Heart left ventricle (tissue), 16 donors: ENCODE measurements at regions of chr5 and their contacts with region 1.

Region 1: DNA sequence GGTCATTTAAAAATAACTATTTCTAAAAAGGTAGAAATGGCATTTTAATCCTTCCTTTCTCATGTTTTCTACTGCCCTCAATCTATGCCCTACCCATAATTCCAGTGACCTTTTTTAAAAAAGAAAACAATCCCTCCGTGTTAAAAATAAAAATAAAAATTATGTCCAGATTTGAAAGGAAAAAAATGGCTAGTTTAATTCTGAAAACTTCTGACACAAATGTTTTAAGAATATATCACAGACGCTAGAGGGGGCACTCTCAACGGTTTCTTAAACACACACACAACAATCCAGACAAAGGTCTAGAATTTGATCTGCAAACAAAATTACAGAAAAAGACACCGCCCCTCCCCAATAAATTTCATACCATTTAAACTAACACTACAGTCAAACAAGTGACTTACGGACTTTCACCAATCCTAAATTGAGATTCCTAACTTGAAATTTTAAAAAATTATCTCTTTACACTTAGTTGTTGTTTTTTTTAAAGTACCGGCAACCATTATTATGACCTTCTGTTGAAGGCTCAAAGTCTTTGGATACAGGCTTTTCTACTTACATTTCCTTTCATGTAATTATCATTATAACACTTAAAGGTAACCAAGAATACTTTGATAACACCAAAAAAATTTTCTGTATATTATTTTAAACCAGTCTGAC is 38.2 kb downstream of the CLINT1 start:
- DNase-seq: peak in 1 of 5 donors; percentile 22
- ATAC-seq: peak in 1 of 4 donors; percentile 58
- H3K4me3 ChIP-seq: no peak overlapping the region
- H3K27ac ChIP-seq: peak overlapping the region in 5 of 12 donors; percentile 23 to 72 (median 32)
- H3K4me1 ChIP-seq: peaks cover 0 to 54% (median 29%) of the 10 kb centered on the region in 12 donors
- H3K27me3 ChIP-seq: no peaks in the 10 kb centered on the region
- CTCF ChIP-seq: peak; percentile 30 to 70 (median 54)
- POLR2A ChIP-seq: no peak

Region 2: DNA sequence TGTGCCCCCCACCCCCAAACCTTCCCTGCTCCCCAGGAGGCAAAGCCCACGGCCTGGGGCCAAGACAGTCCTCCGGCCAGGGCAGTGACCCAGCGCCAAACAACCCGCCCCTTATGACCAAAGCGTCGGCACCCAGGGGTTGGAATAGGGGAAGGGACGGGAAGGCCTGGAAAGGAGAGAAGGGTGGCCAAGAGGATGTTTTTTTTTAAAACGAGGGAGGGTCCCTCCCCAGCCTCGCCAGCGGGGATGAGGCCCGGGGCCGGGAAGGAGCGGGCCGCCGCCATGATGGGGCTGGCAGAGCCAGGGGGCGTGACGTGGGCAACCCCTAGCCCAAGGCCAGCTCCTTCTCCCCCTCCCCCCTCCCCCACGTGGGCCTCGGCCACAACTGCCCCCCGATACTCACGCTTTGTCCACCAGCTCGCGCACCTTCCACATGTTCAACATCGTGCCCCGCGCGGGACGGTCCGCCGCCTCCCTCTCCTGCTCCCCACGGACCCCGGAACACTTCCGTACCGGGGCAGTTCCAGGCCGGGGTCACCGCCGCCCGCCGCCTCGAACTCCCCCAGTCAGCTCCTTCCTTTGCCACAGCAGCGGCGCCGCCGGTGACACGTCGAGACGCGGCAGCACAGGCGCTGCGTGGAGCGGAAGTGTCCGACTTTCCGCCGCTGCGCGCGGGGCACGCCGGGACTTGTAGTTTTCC is 38.0 kb after region 1 on chr5 and contains the start of gene CLINT1:
- intact Hi-C with region 1: loop called in 7 of 10 experiments (anchors 2 to 5 kb)
- DNase-seq: peak; percentile 93 to 97 (median 94)
- ATAC-seq: peak; percentile 93 to 99 (median 99)
- H3K4me3 ChIP-seq: peak within 1 kb of the TSS; percentile 67 to 98 (median 88)
- H3K27ac ChIP-seq: peak within 1 kb of the TSS; percentile 35 to 93 (median 90)
- H3K4me1 ChIP-seq: peaks cover 0 to 47% (median 26%) of the 10 kb centered on the region in 12 donors
- H3K27me3 ChIP-seq: no peaks in the 10 kb centered on the region
- CTCF ChIP-seq: peak in 1 of 12 donors; percentile 12
- POLR2A ChIP-seq: peak in 1 of 2 donors; percentile 82
- total RNA-seq, gene CLINT1: 40.1 to 84.8 (median 51.2) TPM

Region 3: GRCh38 chr5:157917899-157918809 is 97.4 kb after region 1 on chr5:
- intact Hi-C with region 1: loop called in 5 of 10 experiments (anchors 2 to 10 kb)
- DNase-seq: peak; percentile 51 to 73 (median 58)
- ATAC-seq: peak in 2 of 4 donors; percentile 36 to 55
- H3K4me3 ChIP-seq: no peak overlapping the region
- H3K27ac ChIP-seq: peak overlapping the region in 1 of 12 donors; percentile 24
- H3K4me1 ChIP-seq: peaks cover 0 to 47% (median 29%) of the 10 kb centered on the region in 12 donors
- H3K27me3 ChIP-seq: no peaks in the 10 kb centered on the region
- CTCF ChIP-seq: peak; percentile 9 to 61 (median 44)
- POLR2A ChIP-seq: no peak

Region 4: GRCh38 chr5:157948738-157949410 is 128.2 kb after region 1 on chr5:
- intact Hi-C with region 1: loop called (anchors 1 to 5 kb)
- DNase-seq: peak; percentile 71 to 93 (median 88)
- ATAC-seq: peak; percentile 95 to 100 (median 98)
- H3K4me3 ChIP-seq: peak overlapping the region in 4 of 12 donors; percentile 1 to 26 (median 10)
- H3K27ac ChIP-seq: peak overlapping the region in 4 of 12 donors; percentile 31 to 73 (median 41)
- H3K4me1 ChIP-seq: peaks cover 0 to 9% (median 4%) of the 10 kb centered on the region in 12 donors
- H3K27me3 ChIP-seq: no peaks in the 10 kb centered on the region
- CTCF ChIP-seq: peak; percentile 79 to 95 (median 88)
- POLR2A ChIP-seq: no peak

Region 5: DNA sequence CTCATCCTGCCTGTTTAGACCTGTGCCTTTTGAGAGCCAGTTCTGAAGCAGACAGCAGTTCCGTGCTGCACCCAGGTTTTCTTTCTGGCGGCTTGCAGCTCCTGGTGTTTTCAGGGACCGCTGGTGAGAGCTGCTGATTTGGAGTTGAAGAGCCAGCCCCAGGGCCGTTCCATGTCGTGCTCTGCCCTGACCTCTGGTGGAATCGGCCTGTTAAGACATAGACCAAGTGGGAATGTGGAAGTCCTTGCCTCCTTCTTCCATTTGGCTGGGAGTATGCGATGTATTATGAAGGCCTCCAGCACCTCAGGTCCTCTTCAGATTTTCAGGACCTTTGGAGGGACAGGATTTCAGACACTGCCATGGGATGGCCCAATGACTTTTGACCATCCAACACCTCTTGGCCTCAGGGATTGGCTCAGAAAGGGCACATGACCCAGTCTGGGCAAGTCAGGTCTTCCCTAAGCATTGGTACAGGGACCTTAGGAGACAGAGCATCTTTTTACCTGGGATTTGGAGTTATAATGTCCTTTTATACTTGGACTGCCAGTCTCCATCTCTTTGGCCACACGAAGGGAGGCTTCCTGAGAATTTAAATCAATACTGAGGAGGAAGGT is 174.3 kb after region 1 on chr5:
- intact Hi-C with region 1: loop called in 9 of 10 experiments (anchors 1 to 10 kb)
- DNase-seq: peak; percentile 60 to 73 (median 69)
- ATAC-seq: peak; percentile 91 to 96 (median 95)
- H3K4me3 ChIP-seq: no peak overlapping the region
- H3K27ac ChIP-seq: no peak overlapping the region
- H3K4me1 ChIP-seq: no peaks in the 10 kb centered on the region
- H3K27me3 ChIP-seq: peaks cover 0 to 4% (median 0%) of the 10 kb centered on the region in 9 donors
- CTCF ChIP-seq: peak; percentile 56 to 81 (median 76)
- POLR2A ChIP-seq: no peak

Region 6: DNA sequence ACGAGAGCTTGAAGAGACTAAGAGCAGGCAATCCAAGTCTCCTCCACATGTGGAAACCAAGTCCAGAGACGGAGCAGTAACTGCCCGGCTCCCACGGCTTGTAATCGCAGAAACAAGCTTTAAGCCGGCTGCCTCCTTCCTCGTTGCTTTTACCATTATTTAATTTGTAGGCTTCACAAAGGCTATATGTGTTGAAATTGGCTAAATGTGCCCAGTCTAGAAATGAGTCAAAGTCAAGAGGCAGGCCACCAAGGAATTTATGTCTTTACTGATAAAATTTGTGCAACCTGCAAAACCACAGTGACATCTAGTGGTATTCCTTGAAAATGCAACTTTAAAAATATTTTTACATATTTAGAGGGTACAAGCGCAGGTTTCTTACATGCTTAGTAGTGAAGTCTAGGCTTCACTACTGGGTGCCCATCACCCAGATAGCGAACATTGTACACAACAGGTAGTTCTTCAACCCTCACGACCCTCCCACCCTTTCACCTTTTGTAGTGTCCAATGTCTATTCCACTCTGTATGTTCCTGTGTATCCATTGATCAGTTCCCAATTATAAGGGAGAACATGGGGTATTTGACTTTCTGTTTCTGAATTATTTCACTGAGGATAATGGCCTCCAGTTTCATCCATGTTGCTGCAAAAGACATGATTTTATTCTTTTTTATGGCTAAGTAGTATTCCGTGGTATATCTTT is 1312.5 kb after region 1 on chr5:
- intact Hi-C with region 1: loop called in 5 of 10 experiments (anchors 2 to 10 kb)
- DNase-seq: no peak
- ATAC-seq: peak in 3 of 4 donors; percentile 44 to 78 (median 58)
- H3K4me3 ChIP-seq: peak overlapping the region in 8 of 12 donors; percentile 6 to 41 (median 28)
- H3K27ac ChIP-seq: peak overlapping the region in 1 of 12 donors; percentile 25
- H3K4me1 ChIP-seq: peaks cover 0 to 8% (median 0%) of the 10 kb centered on the region in 12 donors
- H3K27me3 ChIP-seq: peaks cover 0 to 7% (median 0%) of the 10 kb centered on the region in 9 donors
- CTCF ChIP-seq: peak; percentile 74 to 88 (median 82)
- POLR2A ChIP-seq: no peak